HepG2 (cell line): ENCODE measurements at regions of chr11 and their contacts with region 1.

Region 1: DNA sequence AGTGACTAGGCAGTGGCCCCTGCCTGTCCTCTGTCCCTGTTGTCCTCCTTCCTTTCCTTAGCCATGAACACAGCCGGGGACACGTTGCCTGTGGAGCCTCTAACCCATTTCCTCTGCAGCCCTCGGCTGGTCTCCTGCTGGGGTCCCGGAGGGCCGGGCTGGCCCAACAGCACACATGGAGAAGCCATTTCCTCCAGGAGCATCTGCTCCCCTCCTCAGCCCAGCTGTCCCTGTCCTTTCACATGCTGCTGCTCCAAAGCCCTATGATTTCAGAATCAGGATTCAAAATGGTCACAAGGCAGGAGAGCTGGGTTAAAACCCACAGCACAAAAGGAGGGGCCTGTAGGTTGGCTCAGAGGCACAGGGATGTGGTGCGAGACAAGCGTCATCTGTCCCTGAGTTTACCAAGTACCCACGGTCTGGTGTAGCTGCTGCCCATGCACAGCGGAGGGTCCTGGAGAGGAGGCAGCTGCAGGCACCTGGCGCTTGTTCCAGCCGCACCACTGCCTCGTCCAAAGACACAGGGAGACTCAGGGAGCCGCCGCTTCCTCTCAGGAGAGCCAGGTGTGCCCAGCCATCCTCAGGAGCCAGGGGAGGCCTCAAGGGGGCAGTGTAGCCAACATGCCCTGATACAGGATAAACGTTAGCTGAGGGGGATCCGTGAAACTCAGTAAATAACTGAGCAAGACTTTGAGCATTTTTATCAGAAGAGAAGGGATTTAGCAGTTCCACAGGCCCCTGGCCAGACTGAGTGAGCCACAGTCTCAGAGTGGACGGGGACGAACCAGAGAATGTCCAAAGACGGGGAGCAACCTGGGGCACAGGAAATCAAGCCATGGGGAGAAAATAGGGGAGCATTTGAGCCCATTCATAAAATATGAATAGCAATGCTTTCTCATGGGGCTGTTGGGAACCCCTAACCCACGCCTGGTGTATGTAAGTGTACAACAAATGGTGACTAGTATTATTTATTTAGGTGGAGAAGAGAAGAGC is 3.9 kb upstream of the VSIG10L2 start:
- DNase-seq: peak; percentile 60
- ATAC-seq: peak; percentile 93
- H3K4me3 ChIP-seq: peak overlapping the region; percentile 36 to 64 (median 37)
- H3K27ac ChIP-seq: no peak overlapping the region
- H3K4me1 ChIP-seq: peaks cover 43% of the 10 kb centered on the region
- H3K27me3 ChIP-seq: peaks cover 0 to 3% of the 10 kb centered on the region in 2 experiments; a peak in 1 of 5 replicates
- CTCF ChIP-seq: peak; percentile 93
- EP300 ChIP-seq: no peak
- POLR2A ChIP-seq: no peak
- RAD21 ChIP-seq: peak; percentile 39; the same call in 1 of the 2 replicates

Region 2: DNA sequence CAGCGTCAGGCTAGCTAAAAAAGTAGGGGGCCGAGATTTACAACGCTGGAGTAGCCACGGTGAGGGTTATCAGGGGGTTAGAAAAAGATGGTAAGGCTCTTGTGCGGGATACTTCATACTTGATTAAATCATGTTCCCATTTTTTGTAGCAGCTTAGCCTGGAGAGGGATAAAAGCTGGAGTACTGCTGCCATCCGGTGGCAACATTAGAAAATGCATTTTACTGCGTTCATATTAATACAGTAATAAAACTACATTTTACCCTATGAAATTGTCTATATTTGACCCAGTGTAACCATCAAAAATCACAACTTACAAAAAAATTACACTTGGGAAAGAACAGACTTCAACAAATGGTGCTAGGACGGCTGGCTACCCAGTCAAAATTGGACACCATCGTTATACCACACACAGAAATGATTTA is 252.2 kb after region 1 on chr11:
- CTCF ChIA-PET with region 1: interaction called, 15 read pairs
- POLR2A ChIA-PET with region 1: no interaction called
- in situ Hi-C with region 1: no loop called
- intact Hi-C with region 1: loop called (anchors 1 kb)
- DNase-seq: peak; percentile 44
- ATAC-seq: no peak
- H3K4me3 ChIP-seq: no peak overlapping the region
- H3K27ac ChIP-seq: peak overlapping the region; percentile 52
- H3K4me1 ChIP-seq: peaks cover 51% of the 10 kb centered on the region
- H3K27me3 ChIP-seq: no peaks in the 10 kb centered on the region
- CTCF ChIP-seq: peak; percentile 79
- EP300 ChIP-seq: no peak
- POLR2A ChIP-seq: no peak
- RAD21 ChIP-seq: peak; percentile 88

Region 3: GRCh38 chr11:126303623-126304456 is 361.9 kb after region 1 on chr11 and contains the start of gene DCPS:
- CTCF ChIA-PET with region 1: no interaction called
- POLR2A ChIA-PET with region 1: no interaction called
- in situ Hi-C with region 1: no loop called
- intact Hi-C with region 1: no loop called
- DNase-seq: peak; percentile 75
- ATAC-seq: peak; percentile 99
- H3K4me3 ChIP-seq: peak within 1 kb of the TSS; percentile 72 to 88 (median 78)
- H3K27ac ChIP-seq: peak within 1 kb of the TSS; percentile 86
- H3K4me1 ChIP-seq: peaks cover 20% of the 10 kb centered on the region
- H3K27me3 ChIP-seq: no peaks in the 10 kb centered on the region
- CTCF ChIP-seq: peak; percentile 17; the same call in 1 of the 2 replicates
- EP300 ChIP-seq: no peak
- POLR2A ChIP-seq: peak; percentile 94 to 96
- RAD21 ChIP-seq: no peak
- total RNA-seq, gene DCPS: 21.9 and 24.1 TPM in 2 replicates